ENCODE measurements at regions of chrX and their contacts with region 1.

Region 1: GRCh38 chrX:107025545-107025944 is 25.5 kb upstream of the MORC4 start:
- DNase-seq: peak; percentile 31
- H3K4me3 ChIP-seq: no peak overlapping the region
- H3K27ac ChIP-seq: no peak overlapping the region
- H3K4me1 ChIP-seq: no peaks in the 10 kb centered on the region
- H3K27me3 ChIP-seq: no peaks in the 10 kb centered on the region
- CTCF ChIP-seq: peak; percentile 67

Region 2: GRCh38 chrX:107288676-107289075 is 263.1 kb after region 1 on chrX:
- CTCF ChIA-PET with region 1: no interaction called
- POLR2A ChIA-PET with region 1: no interaction called
- intact Hi-C with region 1: loop called (anchors 10 kb)
- DNase-seq: no peak
- H3K4me3 ChIP-seq: no peak overlapping the region
- H3K27ac ChIP-seq: no peak overlapping the region
- H3K4me1 ChIP-seq: no peaks in the 10 kb centered on the region
- H3K27me3 ChIP-seq: peaks cover 6% of the 10 kb centered on the region
- CTCF ChIP-seq: no peak

Region 3: GRCh38 chrX:107429090-107429489 is 403.5 kb after region 1 on chrX:
- CTCF ChIA-PET with region 1: no interaction called
- POLR2A ChIA-PET with region 1: no interaction called
- intact Hi-C with region 1: loop called (anchors 1 kb)
- DNase-seq: peak; percentile 45
- H3K4me3 ChIP-seq: no peak overlapping the region
- H3K27ac ChIP-seq: no peak overlapping the region
- H3K4me1 ChIP-seq: no peaks in the 10 kb centered on the region
- H3K27me3 ChIP-seq: no peaks in the 10 kb centered on the region
- CTCF ChIP-seq: peak; percentile 47

Region 4: DNA sequence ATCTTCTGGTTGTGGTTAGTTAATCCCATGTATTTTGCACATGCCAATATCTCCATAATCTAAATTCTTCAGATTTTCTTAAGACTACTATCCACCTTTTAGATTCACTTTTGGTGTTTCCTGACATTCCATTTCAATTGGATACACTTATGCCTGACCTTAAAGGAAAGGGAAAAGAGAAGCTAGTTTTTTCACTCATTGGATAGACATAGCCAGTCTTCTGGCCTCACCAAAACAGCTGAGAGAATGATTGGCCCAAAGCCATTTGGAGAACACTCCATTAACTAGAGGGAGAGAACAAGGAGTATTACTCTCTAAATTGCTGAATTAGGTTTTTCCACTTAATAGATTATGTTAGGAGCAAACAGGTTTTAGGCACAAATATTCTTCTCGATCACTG is 606.8 kb after region 1 on chrX:
- CTCF ChIA-PET with region 1: no interaction called
- POLR2A ChIA-PET with region 1: no interaction called
- intact Hi-C with region 1: loop called (anchors 10 kb)
- DNase-seq: no peak
- H3K4me3 ChIP-seq: no peak overlapping the region
- H3K27ac ChIP-seq: no peak overlapping the region
- H3K4me1 ChIP-seq: peaks cover 5% of the 10 kb centered on the region
- H3K27me3 ChIP-seq: no peaks in the 10 kb centered on the region
- CTCF ChIP-seq: no peak